Posterior cingulate gyrus (tissue), 11 donors: ENCODE measurements at regions of chr5 and their contacts with region 1.

Region 1: GRCh38 chr5:35003018-35003957 is 44.5 kb downstream of the AGXT2 start:
- DNase-seq: peak in 7 of 10 donors; percentile 20 to 92 (median 55)

Region 2: DNA sequence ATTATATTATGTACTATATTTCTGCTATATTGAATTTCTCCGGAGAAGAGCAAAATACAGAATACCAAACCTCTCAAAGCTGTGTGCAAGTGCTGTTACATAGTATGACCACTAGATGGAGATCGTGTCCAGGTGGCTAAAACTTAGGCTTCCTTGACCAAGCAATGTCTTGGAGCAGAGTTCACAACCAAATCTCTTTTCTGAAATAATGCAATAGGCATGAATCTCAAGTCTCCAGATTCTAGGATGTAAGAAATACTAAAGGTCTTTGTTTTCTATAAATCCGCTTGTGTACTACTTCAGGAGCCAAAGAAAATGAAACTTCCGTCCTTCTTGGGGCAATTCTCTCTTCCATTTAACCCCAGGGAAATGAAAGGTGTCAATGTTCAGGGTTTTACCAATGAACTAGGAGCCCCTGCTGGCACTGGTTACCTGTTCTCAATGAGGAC is 528.7 kb before region 1 on chr5:
- intact Hi-C with region 1: loop called (anchors 1 kb)
- DNase-seq: peak in 2 of 10 donors; percentile 26 to 41

Region 3: DNA sequence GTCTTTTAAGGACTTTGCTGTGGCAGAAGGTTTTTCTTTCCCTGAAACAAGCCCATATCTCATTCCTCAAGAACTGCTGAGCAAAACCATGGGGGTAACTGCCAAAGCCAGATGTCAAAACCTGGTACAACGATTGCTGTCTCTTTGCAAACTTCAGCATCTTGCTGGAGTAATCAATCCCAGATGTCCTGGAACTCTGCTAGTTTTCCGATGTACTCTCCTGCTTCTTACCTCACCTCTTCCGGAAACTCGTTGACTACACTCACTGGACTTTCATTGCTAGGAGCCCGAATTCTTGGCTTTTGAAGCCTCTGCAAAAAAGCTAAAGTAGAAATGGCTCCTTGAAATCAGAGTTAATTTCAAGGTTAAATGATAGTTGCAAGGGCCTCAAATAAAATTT is 111.3 kb before region 1 on chr5:
- intact Hi-C with region 1: no loop called
- DNase-seq: no peak

Region 4: DNA sequence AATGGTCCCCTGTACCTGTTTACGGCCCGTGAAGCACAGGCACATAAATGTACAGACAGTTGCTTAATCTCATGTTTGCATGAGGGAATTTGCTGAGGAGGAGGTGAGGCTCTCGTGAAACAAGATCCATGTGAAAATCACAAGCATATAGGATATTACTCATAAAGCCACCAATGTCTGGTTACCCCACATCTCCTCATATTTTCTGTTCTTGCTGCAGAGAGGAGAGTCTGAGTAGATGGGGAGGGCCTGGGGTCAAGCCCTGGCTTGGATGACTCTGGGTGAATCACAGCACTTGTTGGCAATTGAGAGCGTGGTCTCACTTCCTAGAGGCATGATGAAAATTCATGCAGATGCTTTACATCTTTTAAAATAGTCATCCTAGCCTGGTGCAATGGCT is 43.5 kb after region 1 on chr5:
- intact Hi-C with region 1: no loop called
- DNase-seq: no peak

Region 5: GRCh38 chr5:35066260-35066795 is 63.0 kb after region 1 on chr5:
- intact Hi-C with region 1: no loop called
- DNase-seq: no peak